ENCODE measurements at regions of chr1 and their contacts with region 1.

Region 1: DNA sequence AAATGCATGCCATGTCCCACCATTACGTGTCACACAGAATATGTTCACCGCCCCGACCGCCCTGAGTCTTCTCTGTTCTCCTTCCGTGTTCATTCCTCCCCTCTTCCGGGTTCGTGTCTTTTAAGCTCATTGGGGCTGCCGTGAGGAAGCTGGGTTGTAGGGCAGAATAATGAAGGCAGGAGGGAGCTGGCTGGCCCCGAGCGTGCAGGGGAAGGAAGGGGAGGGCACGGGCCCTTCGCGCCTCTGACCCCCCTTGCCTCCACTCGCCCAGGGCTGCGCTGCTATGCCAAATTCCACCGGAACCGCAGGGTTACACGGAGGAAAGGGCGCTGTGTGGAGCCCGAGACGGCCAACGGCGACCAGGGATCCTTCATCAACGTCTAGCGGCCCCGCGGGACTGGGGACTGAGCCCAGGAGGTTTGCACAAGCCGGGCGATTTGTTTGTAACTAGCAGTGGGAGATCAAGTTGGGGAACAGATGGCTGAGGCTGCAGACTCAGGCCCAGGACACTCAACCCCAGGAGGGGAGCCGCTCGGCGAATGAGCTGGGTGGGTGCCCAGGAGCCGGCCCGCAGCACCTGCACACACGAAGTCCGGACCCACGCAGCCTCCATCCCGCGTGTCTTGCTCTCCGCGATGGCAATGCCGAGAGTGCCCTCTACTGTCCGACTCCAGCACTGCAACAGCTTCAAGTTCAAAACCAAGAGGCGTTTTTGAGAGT is 16.5 kb upstream of the AGTRAP start:
- DNase-seq: no peak
- ATAC-seq: peak; percentile 68
- H3K4me3 ChIP-seq: peak overlapping the region; percentile 44 to 72 (median 46); a peak in 5 of 6 replicates
- H3K27ac ChIP-seq: no peak overlapping the region
- H3K4me1 ChIP-seq: peaks cover 11% of the 10 kb centered on the region
- H3K27me3 ChIP-seq: peaks cover 6 to 40% of the 10 kb centered on the region in 2 experiments; a peak in 4 of 5 replicates
- CTCF ChIP-seq: peak; percentile 95
- EP300 ChIP-seq: no peak
- POLR2A ChIP-seq: no peak
- RAD21 ChIP-seq: peak; percentile 88

Region 2: DNA sequence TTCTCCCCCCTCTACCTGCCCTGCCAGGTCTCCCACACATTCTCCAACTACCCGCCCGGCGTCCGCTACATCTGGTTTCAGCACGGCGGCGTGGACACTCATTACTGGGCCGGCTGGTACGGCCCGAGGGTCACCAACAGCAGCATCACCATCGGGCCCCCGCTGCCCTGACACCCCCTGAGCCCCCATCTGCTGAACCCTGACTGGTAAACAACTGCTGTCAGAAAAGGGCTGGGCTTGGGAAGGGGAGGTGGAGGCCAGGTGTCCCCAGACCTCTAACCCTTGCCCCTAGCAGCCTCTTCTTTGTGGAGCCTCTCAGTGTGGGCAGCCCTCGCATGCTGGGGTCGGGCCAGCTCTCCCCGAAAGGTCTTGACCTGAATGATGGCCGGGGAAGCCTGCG is 58.4 kb before region 1 on chr1:
- CTCF ChIA-PET with region 1: interaction called, 15 read pairs
- POLR2A ChIA-PET with region 1: interaction called, 9 read pairs
- in situ Hi-C with region 1: loop called (anchors 5 kb)
- intact Hi-C with region 1: loop called (anchors 1 kb)
- DNase-seq: no peak
- ATAC-seq: no peak
- H3K4me3 ChIP-seq: no peak overlapping the region
- H3K27ac ChIP-seq: no peak overlapping the region
- H3K4me1 ChIP-seq: peaks cover 20% of the 10 kb centered on the region
- H3K27me3 ChIP-seq: no peaks in the 10 kb centered on the region; a peak in 1 of 5 replicates
- CTCF ChIP-seq: no peak
- EP300 ChIP-seq: no peak
- POLR2A ChIP-seq: no peak
- RAD21 ChIP-seq: no peak

Region 3: GRCh38 chr1:11693024-11693590 is 26.4 kb before region 1 on chr1:
- CTCF ChIA-PET with region 1: no interaction called
- POLR2A ChIA-PET with region 1: no interaction called
- in situ Hi-C with region 1: no loop called
- intact Hi-C with region 1: no loop called
- DNase-seq: no peak
- ATAC-seq: no peak
- H3K4me3 ChIP-seq: no peak overlapping the region
- H3K27ac ChIP-seq: no peak overlapping the region
- H3K4me1 ChIP-seq: peaks cover 15% of the 10 kb centered on the region
- H3K27me3 ChIP-seq: peaks cover 16 to 70% of the 10 kb centered on the region in 2 experiments
- CTCF ChIP-seq: no peak
- EP300 ChIP-seq: no peak
- POLR2A ChIP-seq: no peak
- RAD21 ChIP-seq: no peak

Region 4: GRCh38 chr1:11729498-11730428 is 10.3 kb after region 1 on chr1:
- CTCF ChIA-PET with region 1: no interaction called
- POLR2A ChIA-PET with region 1: no interaction called
- in situ Hi-C with region 1: no loop called
- intact Hi-C with region 1: no loop called
- DNase-seq: peak; percentile 23
- ATAC-seq: peak; percentile 57
- H3K4me3 ChIP-seq: peak overlapping the region in 1 of 3 experiments; percentile 29; a peak in 1 of 6 replicates
- H3K27ac ChIP-seq: no peak overlapping the region
- H3K4me1 ChIP-seq: peaks cover 45% of the 10 kb centered on the region
- H3K27me3 ChIP-seq: peaks cover 2 to 23% of the 10 kb centered on the region in 2 experiments; a peak in 3 of 5 replicates
- CTCF ChIP-seq: no peak
- EP300 ChIP-seq: no peak
- POLR2A ChIP-seq: no peak
- RAD21 ChIP-seq: no peak

Measured in HepG2 (cell line).